CD4-positive, alpha-beta memory T cell (primary cell): ENCODE measurements at regions of chr20 and their contacts with region 1.

Region 1: GRCh38 chr20:2693286-2694000 is 863 bp downstream of the EBF4 start:
- DNase-seq: peak; percentile 39 to 63 (median 41)
- H3K4me3 ChIP-seq: no peak overlapping the region
- H3K4me3 Mint-ChIP-seq: peak overlapping the region in 2 of 8 donors; percentile 25 to 32
- H3K27ac ChIP-seq: no peak overlapping the region
- H3K27ac Mint-ChIP-seq: no peak overlapping the region
- H3K4me1 ChIP-seq: peaks cover 6% of the 10 kb centered on the region
- H3K4me1 Mint-ChIP-seq: peaks cover 10 to 20% (median 17%) of the 10 kb centered on the region in 4 donors
- H3K27me3 ChIP-seq: peaks cover 19% of the 10 kb centered on the region
- H3K27me3 Mint-ChIP-seq: peaks cover 25 to 40% of the 10 kb centered on the region in 2 donors

Region 2: DNA sequence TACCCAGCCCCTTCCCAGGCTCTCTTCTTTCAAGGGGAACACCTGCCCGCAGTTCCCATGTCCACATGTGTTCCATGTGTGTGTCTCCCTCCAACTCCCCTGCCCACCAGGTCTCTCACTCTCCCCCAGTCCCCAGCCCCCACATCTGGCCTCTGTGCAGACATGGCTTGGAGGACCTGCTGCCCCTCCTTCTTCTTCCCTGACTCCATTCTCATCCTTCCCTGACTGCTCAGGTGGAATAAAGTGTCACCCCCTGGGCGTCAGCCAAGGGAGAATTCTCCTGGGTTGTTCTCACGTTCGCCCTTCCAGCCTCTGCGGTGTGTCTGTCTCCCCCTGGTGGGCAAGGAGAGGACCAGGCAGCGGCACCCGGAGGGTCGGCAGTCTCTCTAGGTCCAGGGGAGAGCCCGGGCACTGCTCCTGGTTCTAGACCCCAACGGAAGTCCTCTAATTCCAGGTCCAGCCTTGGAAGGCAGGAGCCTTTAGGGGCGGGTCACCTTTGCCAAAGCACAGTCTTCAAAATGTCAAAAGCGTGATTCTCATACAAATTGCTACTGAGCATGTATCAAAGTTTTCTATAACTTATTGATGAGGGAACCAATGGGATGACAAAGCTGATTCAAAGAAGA is 49.6 kb after region 1 on chr20:
- CTCF ChIA-PET with region 1: interaction called, 99 read pairs
- POLR2A ChIA-PET with region 1: interaction called, 27 read pairs
- intact Hi-C with region 1: loop called (anchors 1 kb)
- DNase-seq: peak; percentile 68 to 80 (median 74)
- H3K4me3 ChIP-seq: no peak overlapping the region
- H3K4me3 Mint-ChIP-seq: peak overlapping the region; percentile 56 to 94 (median 72)
- H3K27ac ChIP-seq: peak overlapping the region; percentile 42
- H3K27ac Mint-ChIP-seq: peak overlapping the region; percentile 84 to 98 (median 93)
- H3K4me1 ChIP-seq: peaks cover 42% of the 10 kb centered on the region
- H3K4me1 Mint-ChIP-seq: peaks cover 37 to 56% (median 44%) of the 10 kb centered on the region in 4 donors
- H3K27me3 ChIP-seq: no peaks in the 10 kb centered on the region
- H3K27me3 Mint-ChIP-seq: no peaks in the 10 kb centered on the region